SK-N-SH (cell line): ENCODE measurements at regions of chr14 and their contacts with region 1.

Region 1: DNA sequence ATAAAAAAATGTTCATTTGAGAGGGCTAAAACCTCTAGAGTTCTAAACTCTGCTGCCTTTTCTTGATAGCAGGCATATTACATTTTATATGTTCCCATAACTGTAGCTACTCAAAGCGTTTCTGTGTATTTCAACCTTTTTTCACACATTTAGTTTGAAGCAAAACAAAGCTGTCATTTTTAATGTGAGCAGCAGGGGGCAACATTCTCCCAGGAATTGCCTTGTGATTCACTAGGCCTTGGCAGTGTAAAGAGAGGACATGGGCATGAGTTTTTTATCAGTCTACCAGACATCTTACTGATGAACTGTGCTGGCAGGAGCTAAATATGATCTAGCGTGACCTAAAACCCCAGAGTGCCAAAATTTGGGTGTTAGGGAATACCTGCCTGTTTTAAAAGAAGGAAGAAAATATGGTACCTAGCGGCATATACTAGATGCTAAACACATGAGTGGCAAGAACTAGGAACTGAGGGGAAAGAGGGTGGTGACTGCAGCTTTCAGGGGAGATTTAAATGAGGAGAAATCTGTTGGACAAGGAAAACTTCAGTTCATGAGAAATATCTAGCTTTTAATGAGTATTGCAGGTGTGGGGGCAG is 65.3 kb downstream of the IFT43 start:
- DNase-seq: peak; percentile 63
- H3K4me3 ChIP-seq: peak overlapping the region in 1 of 2 experiments; percentile 9; a peak in 1 of 4 replicates
- H3K27ac ChIP-seq: no peak overlapping the region
- H3K4me1 ChIP-seq: peaks cover 0 to 14% of the 10 kb centered on the region in 2 experiments; a peak in 2 of 4 replicates
- H3K27me3 ChIP-seq: no peaks in the 10 kb centered on the region
- CTCF ChIP-seq: peak; percentile 89
- EP300 ChIP-seq: no peak
- RAD21 ChIP-seq: peak; percentile 99

Region 2: GRCh38 chr14:75906676-75907280 is 144.1 kb before region 1 on chr14:
- CTCF ChIA-PET with region 1: interaction called, 12 read pairs
- POLR2A ChIA-PET with region 1: no interaction called
- DNase-seq: peak; percentile 39
- H3K4me3 ChIP-seq: no peak overlapping the region
- H3K27ac ChIP-seq: no peak overlapping the region
- H3K4me1 ChIP-seq: peaks cover 9 to 13% of the 10 kb centered on the region in 2 experiments; a peak in 3 of 4 replicates
- H3K27me3 ChIP-seq: no peaks in the 10 kb centered on the region
- CTCF ChIP-seq: peak; percentile 98
- EP300 ChIP-seq: no peak
- RAD21 ChIP-seq: peak; percentile 87

Region 3: GRCh38 chr14:75972801-75973421 is 78.0 kb before region 1 on chr14:
- CTCF ChIA-PET with region 1: no interaction called
- POLR2A ChIA-PET with region 1: no interaction called
- DNase-seq: peak; percentile 71
- H3K4me3 ChIP-seq: no peak overlapping the region
- H3K27ac ChIP-seq: peak overlapping the region in 1 of 2 experiments; percentile 90; a peak in 2 of 4 replicates
- H3K4me1 ChIP-seq: peaks cover 0 to 24% of the 10 kb centered on the region in 2 experiments; a peak in 2 of 4 replicates
- H3K27me3 ChIP-seq: no peaks in the 10 kb centered on the region
- CTCF ChIP-seq: no peak
- EP300 ChIP-seq: peak in 1 of 2 experiments; percentile 82; a peak in 2 of 4 replicates
- RAD21 ChIP-seq: peak; percentile 2; the same call in 1 of the 2 replicates

Region 4: DNA sequence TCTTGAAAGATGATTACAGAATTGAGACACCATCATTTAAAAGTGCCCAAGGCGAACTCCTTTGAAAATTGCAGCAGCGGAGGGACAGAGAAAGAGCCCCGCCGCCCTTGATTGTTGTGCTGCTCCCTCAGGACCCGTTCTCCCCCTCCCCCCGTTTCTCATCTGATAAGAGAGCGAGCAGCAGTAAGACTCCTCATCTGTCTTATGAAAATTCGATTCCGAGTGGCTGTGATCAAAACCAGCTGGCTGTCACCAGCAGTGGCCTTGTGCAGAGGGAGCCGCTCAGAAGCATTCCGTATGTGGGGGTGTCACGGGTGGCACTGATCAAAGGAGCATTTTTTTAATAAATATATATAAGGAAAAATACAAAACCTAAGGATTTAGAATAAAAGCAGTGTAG is 22.8 kb after region 1 on chr14:
- CTCF ChIA-PET with region 1: interaction called, 25 read pairs
- POLR2A ChIA-PET with region 1: no interaction called
- DNase-seq: peak; percentile 82
- H3K4me3 ChIP-seq: no peak overlapping the region
- H3K27ac ChIP-seq: no peak overlapping the region
- H3K4me1 ChIP-seq: peaks cover 0 to 17% of the 10 kb centered on the region in 2 experiments; a peak in 2 of 4 replicates
- H3K27me3 ChIP-seq: no peaks in the 10 kb centered on the region
- CTCF ChIP-seq: no peak
- EP300 ChIP-seq: peak in 1 of 2 experiments; percentile 82; a peak in 2 of 4 replicates
- RAD21 ChIP-seq: no peak

Region 5: DNA sequence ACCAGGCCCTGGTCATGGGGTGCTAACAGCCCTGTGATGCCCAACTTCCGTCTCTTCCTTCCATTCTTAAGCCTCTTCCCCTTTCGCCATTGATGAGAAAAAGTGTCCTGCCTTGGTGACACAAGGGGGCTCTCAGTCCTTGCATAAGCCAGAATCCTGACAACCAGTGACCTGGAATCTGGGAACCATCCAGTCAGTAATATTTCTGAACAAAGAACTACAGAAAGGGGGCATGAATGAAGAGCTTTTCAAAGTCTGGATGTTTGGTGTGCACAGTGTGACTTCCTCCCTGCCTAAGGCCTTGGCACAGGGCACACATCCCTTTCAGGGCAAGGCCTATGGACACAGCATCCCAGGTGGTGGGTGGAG is 51.1 kb after region 1 on chr14:
- CTCF ChIA-PET with region 1: interaction called, 14 read pairs
- POLR2A ChIA-PET with region 1: no interaction called
- DNase-seq: no peak
- H3K4me3 ChIP-seq: no peak overlapping the region
- H3K27ac ChIP-seq: no peak overlapping the region
- H3K4me1 ChIP-seq: peaks cover 0 to 11% of the 10 kb centered on the region in 2 experiments; a peak in 1 of 4 replicates
- H3K27me3 ChIP-seq: no peaks in the 10 kb centered on the region; the same call in 1 of the 2 replicates
- CTCF ChIP-seq: no peak
- EP300 ChIP-seq: no peak
- RAD21 ChIP-seq: peak; percentile 48; the same call in 1 of the 2 replicates

Region 6: GRCh38 chr14:76352639-76353281 is 301.9 kb after region 1 on chr14:
- CTCF ChIA-PET with region 1: interaction called, 221 read pairs
- POLR2A ChIA-PET with region 1: no interaction called
- DNase-seq: peak; percentile 90
- H3K4me3 ChIP-seq: peak overlapping the region; percentile 9 to 46; a peak in 2 of 4 replicates
- H3K27ac ChIP-seq: no peak overlapping the region
- H3K4me1 ChIP-seq: peaks cover 7 to 12% of the 10 kb centered on the region in 2 experiments; a peak in 3 of 4 replicates
- H3K27me3 ChIP-seq: peaks cover 22% of the 10 kb centered on the region; the same call in 1 of the 2 replicates
- CTCF ChIP-seq: peak; percentile 80
- EP300 ChIP-seq: no peak
- RAD21 ChIP-seq: peak; percentile 76

Region 7: GRCh38 chr14:76647697-76648298 is 596.9 kb after region 1 on chr14:
- CTCF ChIA-PET with region 1: interaction called, 111 read pairs
- POLR2A ChIA-PET with region 1: no interaction called
- DNase-seq: peak; percentile 62
- H3K4me3 ChIP-seq: no peak overlapping the region
- H3K27ac ChIP-seq: no peak overlapping the region
- H3K4me1 ChIP-seq: peaks cover 0 to 9% of the 10 kb centered on the region in 2 experiments; a peak in 1 of 4 replicates
- H3K27me3 ChIP-seq: no peaks in the 10 kb centered on the region
- CTCF ChIP-seq: peak; percentile 83
- EP300 ChIP-seq: no peak
- RAD21 ChIP-seq: peak; percentile 78